ENCODE measurements at regions of chr20 and their contacts with region 1.

Region 1: DNA sequence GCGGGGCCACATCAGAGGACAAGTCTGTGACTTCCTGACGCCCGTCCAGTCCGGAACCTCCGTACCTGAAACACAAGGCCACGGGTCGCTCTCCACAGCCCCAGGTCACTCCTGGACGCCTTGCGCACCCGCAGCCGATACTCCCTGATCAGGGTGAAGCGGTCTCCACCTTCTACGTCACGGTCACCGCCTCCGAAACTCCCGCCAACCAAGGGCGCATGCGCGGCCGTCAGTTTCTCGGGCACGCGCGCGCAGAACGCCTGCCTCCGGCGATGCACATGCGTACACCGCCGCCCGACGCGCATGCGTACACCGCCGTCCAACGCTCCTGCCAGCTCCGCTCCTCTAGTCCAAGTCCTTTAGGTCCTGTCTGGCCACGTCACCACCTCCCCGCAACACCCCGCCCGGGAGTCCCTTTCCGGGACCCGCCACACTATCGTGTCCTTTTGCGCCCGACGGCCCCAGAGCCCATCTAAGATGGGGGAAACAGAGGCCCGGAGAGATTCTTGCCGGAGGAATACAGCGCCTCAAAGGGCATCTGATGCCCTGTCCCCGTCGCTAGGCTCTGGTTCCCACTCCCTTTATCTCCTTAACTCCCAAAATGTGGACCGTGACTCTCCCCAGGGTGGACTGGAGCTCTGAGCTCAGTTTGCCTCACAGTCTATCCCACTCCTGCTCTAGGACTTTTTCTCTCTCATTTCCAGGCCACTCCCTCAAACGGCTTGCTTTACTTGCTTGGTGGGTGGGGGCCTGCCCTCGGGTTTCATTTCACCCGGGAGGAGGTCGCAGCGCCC is at the start of gene DSN1:
- DNase-seq: peak; percentile 96 to 98
- ATAC-seq: peak; percentile 89 to 91
- H3K4me3 ChIP-seq: peak within 1 kb of the TSS; percentile 63
- H3K27ac ChIP-seq: peak within 1 kb of the TSS; percentile 93 to 98
- H3K4me1 ChIP-seq: peaks cover 8% of the 10 kb centered on the region
- CTCF ChIP-seq: no peak; the same call in 2 of the 3 replicates
- EP300 ChIP-seq: no peak
- POLR2A ChIP-seq: peak; percentile 61
- RAD21 ChIP-seq: peak; percentile 43 to 49; a peak in 3 of 5 replicates
- polyA plus RNA-seq, gene DSN1: 32.9 and 41.3 TPM in 2 replicates

Region 2: DNA sequence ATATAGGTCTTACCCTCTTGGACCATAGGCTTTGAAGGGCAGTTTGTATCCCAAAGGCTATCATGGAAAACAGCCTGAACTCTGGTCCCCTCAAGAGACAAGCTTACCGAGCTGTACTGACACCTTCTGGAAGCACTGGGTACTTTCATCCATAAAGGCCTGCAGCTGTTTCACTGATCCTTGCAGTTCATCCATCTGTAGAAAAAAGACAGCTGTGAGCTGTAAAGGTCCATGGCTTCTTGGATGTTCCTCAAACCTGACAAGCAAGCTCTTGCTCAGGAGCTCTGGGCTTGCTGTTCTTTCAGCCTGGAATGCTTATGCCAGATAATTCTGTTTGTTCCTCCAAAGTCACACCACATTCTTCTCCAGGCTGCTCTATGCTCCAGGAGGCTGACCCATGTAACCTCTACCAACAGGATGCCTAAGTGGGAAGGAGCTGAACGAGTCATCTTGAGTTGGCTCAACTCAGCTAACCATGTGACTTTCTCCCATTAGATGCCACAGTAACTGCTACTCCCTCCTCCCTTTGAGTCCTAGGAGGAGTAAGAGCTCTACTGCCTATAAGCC is 19.1 kb before region 1 on chr20:
- CTCF ChIA-PET with region 1: interaction called, 32 read pairs
- POLR2A ChIA-PET with region 1: interaction called, 5 read pairs
- DNase-seq: peak; percentile 76 to 77
- ATAC-seq: peak; percentile 96 to 97
- H3K4me3 ChIP-seq: no peak overlapping the region
- H3K27ac ChIP-seq: no peak overlapping the region
- H3K4me1 ChIP-seq: no peaks in the 10 kb centered on the region
- CTCF ChIP-seq: peak; percentile 68
- EP300 ChIP-seq: no peak
- POLR2A ChIP-seq: no peak
- RAD21 ChIP-seq: peak; percentile 66 to 67

Region 3: DNA sequence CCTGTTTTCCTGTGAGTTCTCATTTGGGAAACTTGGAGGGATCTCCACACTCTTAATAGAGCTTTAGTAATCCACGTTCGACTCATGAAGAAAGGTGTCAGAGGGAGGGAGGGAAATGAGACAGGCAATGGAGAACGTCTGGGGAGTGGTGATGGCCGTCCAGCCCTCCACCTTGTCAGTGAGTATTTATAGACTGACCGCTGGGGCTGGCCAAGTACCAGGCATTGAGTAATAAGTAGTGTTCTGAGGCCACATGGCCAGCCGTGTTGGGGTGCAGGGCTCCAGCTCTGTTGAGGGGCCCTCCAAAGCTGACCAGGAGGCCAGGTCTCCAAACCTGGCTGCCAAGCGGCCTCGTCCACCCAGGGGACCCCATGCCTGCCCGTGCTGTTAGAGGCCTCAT is 11.1 kb after region 1 on chr20:
- CTCF ChIA-PET with region 1: interaction called, 33 read pairs
- POLR2A ChIA-PET with region 1: interaction called, 5 read pairs
- DNase-seq: no peak
- ATAC-seq: no peak
- H3K4me3 ChIP-seq: no peak overlapping the region
- H3K27ac ChIP-seq: no peak overlapping the region
- H3K4me1 ChIP-seq: no peaks in the 10 kb centered on the region
- CTCF ChIP-seq: no peak
- EP300 ChIP-seq: no peak
- POLR2A ChIP-seq: no peak
- RAD21 ChIP-seq: no peak

Region 4: GRCh38 chr20:36792422-36792821 is 18.6 kb after region 1 on chr20:
- CTCF ChIA-PET with region 1: interaction called, 33 read pairs
- POLR2A ChIA-PET with region 1: interaction called, 5 read pairs
- DNase-seq: peak; percentile 54 to 77
- ATAC-seq: peak; percentile 81 to 90; a peak in 5 of 6 replicates
- H3K4me3 ChIP-seq: no peak overlapping the region
- H3K27ac ChIP-seq: no peak overlapping the region
- H3K4me1 ChIP-seq: no peaks in the 10 kb centered on the region
- CTCF ChIP-seq: peak; percentile 37
- EP300 ChIP-seq: no peak
- POLR2A ChIP-seq: no peak
- RAD21 ChIP-seq: peak; percentile 34 to 42; a peak in 3 of 5 replicates